Gastrocnemius medialis (tissue), 4 donors: ENCODE measurements at regions of chr2 and their contacts with region 1.

Region 1: GRCh38 chr2:200306196-200306930 is at the start of gene SPATS2L:
- DNase-seq: peak; percentile 64 to 71
- ATAC-seq: peak; percentile 67
- H3K4me3 ChIP-seq: peak within 1 kb of the TSS; percentile 67 to 91 (median 76)
- H3K27ac ChIP-seq: peak within 1 kb of the TSS; percentile 81 to 95 (median 86)
- H3K4me1 ChIP-seq: peaks cover 31 to 35% of the 10 kb centered on the region in 2 donors
- H3K27me3 ChIP-seq: no peaks in the 10 kb centered on the region
- CTCF ChIP-seq: no peak
- POLR2A ChIP-seq: peak; percentile 76 to 84
- total RNA-seq, gene SPATS2L: 34.0 to 74.2 (median 52.3) TPM

Region 2: DNA sequence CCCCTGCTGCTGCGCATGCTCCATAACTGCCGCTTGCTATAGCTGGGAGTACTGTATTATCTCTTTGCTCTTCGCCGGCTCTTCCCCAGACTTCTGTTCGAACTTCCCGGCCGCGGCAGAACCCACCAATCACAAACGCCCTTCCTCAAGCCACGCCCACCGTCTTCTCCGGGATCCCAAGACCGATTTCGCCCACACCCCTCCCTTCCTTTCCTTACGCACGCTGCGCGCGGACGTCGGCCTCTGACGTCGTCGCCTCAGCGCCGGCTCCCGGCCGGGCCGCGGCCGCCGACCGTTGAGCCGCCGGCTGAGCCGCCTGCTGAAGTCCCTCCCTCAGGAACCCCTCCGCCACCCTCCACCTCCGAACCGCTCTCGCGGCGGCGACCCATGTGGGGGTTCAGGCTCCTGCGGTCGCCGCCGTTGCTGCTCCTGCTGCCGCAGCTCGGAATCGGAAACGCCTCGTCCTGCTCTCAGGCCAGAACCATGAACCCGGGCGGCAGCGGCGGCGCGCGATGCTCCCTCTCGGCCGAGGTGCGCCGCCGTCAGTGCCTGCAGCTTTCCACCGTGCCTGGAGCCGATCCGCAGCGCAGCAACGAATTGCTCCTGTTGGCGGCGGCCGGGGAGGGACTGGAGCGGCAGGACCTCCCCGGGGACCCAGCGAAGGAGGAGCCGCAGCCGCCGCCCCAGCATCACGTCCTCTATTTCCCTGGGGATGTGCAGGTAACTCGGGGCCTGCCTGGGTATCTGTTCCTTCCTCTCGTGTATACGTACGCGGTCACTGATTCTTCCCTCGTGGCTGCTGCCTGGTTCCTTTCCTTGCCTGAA is 395.1 kb before region 1 on chr2 and contains the start of gene C2orf69:
- in situ Hi-C with region 1: no loop called
- intact Hi-C with region 1: loop called (anchors 5 kb)
- DNase-seq: peak; percentile 95 to 96
- ATAC-seq: peak; percentile 97
- H3K4me3 ChIP-seq: peak within 1 kb of the TSS; percentile 89 to 99 (median 90)
- H3K27ac ChIP-seq: peak within 1 kb of the TSS; percentile 96 to 100 (median 96)
- H3K4me1 ChIP-seq: peaks cover 15 to 32% of the 10 kb centered on the region in 2 donors
- H3K27me3 ChIP-seq: no peaks in the 10 kb centered on the region
- CTCF ChIP-seq: peak in 2 of 5 experiments; percentile 15 to 16
- POLR2A ChIP-seq: peak; percentile 84 to 85
- total RNA-seq, gene C2orf69: 5.5 to 11.4 (median 9.3) TPM

Region 3: DNA sequence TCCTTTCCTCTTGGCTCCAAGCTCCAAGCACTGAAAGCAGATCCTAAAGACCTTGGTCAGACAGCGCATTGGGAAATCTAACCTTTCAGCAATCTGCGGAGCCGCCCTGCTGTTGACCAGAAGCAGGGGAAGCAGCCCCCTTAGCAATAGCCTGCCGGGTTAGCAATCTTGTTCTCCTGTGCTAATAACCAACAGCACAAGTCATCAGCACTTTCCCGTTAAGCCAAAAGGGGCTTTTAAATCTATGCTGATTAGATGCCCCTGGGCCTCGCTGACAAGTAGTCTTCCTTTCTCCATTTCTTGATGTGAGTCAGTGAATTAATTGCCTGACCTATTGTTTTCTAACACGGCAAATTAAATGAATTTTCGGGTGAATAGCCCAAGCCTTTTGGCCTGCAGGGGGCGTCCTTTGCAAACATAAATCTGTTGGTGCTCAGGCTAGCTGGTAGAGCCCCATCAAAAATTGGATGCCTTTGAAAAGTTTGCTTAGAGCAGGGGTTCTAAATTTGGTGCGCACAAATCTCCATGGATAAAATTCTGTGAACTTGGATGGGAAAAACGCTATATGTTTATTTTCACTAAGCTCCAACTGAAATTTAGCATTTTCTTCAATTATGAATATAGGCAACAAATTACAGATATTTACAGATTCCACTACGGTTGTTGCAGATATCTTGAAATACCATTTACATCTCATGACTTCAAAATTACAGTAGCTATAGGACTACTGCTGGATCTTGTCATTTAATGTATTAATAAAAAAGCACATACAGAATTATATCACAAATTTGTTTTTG is 326.3 kb before region 1 on chr2:
- in situ Hi-C with region 1: no loop called
- intact Hi-C with region 1: loop called (anchors 5 kb)
- DNase-seq: peak; percentile 40 to 55
- ATAC-seq: peak; percentile 63 to 76
- H3K4me3 ChIP-seq: peak overlapping the region in 3 of 4 donors; percentile 10 to 32 (median 22)
- H3K27ac ChIP-seq: no peak overlapping the region
- H3K4me1 ChIP-seq: peaks cover 0 to 8% of the 10 kb centered on the region in 2 donors
- H3K27me3 ChIP-seq: no peaks in the 10 kb centered on the region
- CTCF ChIP-seq: peak; percentile 71 to 88 (median 79)
- POLR2A ChIP-seq: no peak

Region 4: GRCh38 chr2:200373973-200374416 is 67.6 kb after region 1 on chr2:
- in situ Hi-C with region 1: loop called in 1 of 4 experiments (anchors 10 kb)
- intact Hi-C with region 1: loop called (anchors 1 kb)
- DNase-seq: no peak
- ATAC-seq: no peak
- H3K4me3 ChIP-seq: peak overlapping the region in 1 of 4 donors; percentile 28
- H3K27ac ChIP-seq: peak overlapping the region; percentile 20 to 88 (median 86)
- H3K4me1 ChIP-seq: peaks cover 53 to 70% of the 10 kb centered on the region in 2 donors
- H3K27me3 ChIP-seq: no peaks in the 10 kb centered on the region
- CTCF ChIP-seq: no peak
- POLR2A ChIP-seq: no peak

Region 5: DNA sequence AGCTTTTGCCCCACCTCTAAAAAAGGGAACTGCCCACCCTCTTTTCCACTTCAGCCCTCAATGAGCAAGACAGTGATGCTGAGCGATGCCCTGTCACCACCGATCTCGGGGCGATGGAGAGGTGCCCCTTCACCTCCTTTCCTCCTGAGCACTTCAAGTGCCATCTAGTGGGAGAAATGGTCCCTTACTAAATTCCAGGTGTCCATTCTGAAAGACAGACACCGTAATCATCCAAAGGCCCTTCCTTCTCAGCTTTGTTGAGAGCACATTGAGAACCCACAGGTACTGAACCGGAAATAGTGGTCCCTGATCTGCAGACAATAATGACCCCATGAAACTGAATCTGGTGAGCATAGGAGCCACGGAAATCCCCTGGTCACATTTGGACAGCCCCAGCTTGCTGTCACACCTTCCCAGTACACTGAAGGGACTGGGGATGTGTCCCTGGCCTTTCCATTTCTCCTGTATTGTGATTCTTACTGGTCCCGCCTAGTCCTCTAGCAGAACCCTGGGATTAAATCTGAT is 165.0 kb after region 1 on chr2:
- in situ Hi-C with region 1: loop called in 3 of 4 experiments (anchors 10 to 25 kb)
- intact Hi-C with region 1: loop called (anchors 5 kb)
- DNase-seq: no peak
- ATAC-seq: no peak
- H3K4me3 ChIP-seq: no peak overlapping the region
- H3K27ac ChIP-seq: no peak overlapping the region
- H3K4me1 ChIP-seq: peaks cover 17% of the 10 kb centered on the region in 2 donors
- H3K27me3 ChIP-seq: no peaks in the 10 kb centered on the region
- CTCF ChIP-seq: peak in 4 of 5 experiments; percentile 25 to 55 (median 43)
- POLR2A ChIP-seq: no peak